ENCODE measurements at regions of chr1 and their contacts with region 1.

Region 1: DNA sequence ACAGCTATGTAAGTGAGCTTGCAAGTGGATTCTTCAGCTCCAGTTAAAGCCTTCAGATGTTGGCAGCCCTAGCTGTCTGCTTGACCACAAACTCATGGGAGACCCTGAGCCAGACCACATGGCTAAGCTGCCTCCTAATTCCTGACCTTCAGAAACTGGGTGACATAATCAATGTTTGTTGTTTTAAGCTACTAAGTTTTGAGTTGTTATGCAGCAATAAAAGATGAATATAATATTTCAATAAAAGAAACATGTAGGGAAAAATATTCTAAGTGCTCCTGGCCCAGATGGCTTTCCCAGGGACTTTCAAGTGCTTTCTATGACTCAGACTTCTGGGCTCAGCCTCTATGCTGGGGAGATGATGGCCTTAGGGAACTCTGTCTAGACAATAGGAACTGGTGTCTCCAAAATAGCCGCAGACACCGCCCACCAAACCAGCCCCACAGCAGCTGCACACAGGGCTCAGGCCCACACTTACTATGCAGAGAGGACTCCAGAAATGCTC is 20.3 kb upstream of the AZIN2 start:
- DNase-seq: peak in 1 of 5 donors; percentile 69
- H3K4me3 ChIP-seq: no peak overlapping the region
- H3K27ac ChIP-seq: no peak overlapping the region
- H3K4me1 ChIP-seq: peaks cover 0 to 2% (median 1%) of the 10 kb centered on the region in 3 donors
- H3K27me3 ChIP-seq: no peaks in the 10 kb centered on the region
- CTCF ChIP-seq: no peak

Region 2: DNA sequence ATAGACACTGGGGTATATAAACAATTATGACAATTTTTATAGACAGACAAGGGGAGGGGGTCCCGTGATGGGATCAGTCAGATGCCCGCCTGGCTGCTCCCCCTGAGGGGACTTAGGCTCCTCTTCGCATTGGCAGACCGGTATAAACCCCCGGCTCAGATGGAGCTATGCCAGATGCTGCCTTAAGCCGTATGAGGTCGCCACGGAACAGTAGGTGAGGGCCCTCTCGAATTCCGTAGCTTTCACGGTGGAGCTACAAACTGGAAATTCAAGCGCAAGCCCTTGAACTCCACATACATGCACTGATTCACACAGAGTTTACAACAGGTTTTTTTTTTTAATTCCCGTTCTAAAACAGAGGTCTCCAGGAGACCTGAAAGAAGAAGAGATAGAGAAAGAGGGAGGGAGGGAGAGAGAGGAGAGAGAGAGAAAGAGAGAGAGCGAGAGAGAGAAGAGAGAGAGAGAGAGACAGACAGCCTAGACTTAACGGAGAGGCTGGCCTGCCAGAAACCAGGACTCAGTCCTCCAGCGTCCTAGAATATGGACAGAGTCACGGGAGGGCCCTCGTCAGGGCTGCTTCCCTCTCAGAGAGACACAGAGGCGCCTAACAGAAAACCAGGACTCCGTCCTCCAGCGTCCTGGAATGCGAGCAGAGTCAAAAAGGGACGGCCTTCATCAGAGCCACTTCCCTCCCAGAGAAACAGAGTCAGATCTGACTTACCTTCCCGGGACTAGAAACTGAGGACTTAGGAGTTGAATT is 135.0 kb before region 1 on chr1:
- intact Hi-C with region 1: loop called (anchors 10 kb)
- DNase-seq: peak in 4 of 5 donors; percentile 71 to 91 (median 88)
- H3K4me3 ChIP-seq: peak overlapping the region in 1 of 3 donors; percentile 7
- H3K27ac ChIP-seq: no peak overlapping the region
- H3K4me1 ChIP-seq: peaks cover 0 to 3% (median 0%) of the 10 kb centered on the region in 3 donors
- H3K27me3 ChIP-seq: no peaks in the 10 kb centered on the region
- CTCF ChIP-seq: no peak

Region 3: GRCh38 chr1:33443080-33443704 is 382.6 kb after region 1 on chr1:
- intact Hi-C with region 1: no loop called
- DNase-seq: no peak
- H3K4me3 ChIP-seq: no peak overlapping the region
- H3K27ac ChIP-seq: peak overlapping the region in 1 of 2 donors; percentile 5
- H3K4me1 ChIP-seq: no peaks in the 10 kb centered on the region
- H3K27me3 ChIP-seq: no peaks in the 10 kb centered on the region
- CTCF ChIP-seq: no peak

Measured in kidney (tissue), 22 donors.